Activated CD4-positive, alpha-beta memory T cell treated with anti-CD3 and anti-CD28 coated beads for 36 hours (primary cell): ENCODE measurements at regions of chr1 and their contacts with region 1.

Region 1: DNA sequence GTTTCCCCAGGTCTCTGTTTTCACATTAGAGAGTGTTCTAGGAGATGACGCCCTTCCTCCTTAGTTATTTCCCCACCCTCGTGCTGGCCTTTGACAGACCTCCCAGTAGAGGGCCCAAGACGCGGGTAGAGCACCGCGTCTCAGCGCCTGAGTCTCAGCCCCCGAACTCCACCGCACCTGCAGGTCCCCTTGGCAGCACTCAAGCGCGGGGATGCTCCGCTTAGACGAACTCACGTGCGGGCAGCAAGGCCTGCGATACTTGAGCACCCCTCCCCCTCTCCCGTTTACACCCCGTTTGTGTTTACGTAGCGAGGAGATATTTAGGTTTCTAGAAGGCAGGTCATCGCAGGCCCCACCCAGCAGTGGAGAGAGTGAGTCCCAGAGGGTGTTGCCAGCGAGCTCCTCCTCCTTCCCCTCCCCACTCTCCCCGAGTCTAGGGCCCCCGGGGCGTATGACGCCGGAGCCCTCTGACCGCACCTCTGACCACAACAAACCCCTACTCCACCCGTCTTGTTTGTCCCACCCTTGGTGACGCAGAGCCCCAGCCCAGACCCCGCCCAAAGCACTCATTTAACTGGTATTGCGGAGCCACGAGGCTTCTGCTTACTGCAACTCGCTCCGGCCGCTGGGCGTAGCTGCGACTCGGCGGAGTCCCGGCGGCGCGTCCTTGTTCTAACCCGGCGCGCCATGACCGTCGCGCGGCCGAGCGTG is at the start of gene CD55:
- DNase-seq: peak; percentile 99
- H3K4me3 Mint-ChIP-seq: peak within 1 kb of the TSS; percentile 92
- H3K27ac Mint-ChIP-seq: peak within 1 kb of the TSS; percentile 96
- H3K4me1 Mint-ChIP-seq: peaks cover 33% of the 10 kb centered on the region
- H3K27me3 Mint-ChIP-seq: no peaks in the 10 kb centered on the region
- total RNA-seq, gene CD55: 40.4 to 42.3 TPM

Region 2: DNA sequence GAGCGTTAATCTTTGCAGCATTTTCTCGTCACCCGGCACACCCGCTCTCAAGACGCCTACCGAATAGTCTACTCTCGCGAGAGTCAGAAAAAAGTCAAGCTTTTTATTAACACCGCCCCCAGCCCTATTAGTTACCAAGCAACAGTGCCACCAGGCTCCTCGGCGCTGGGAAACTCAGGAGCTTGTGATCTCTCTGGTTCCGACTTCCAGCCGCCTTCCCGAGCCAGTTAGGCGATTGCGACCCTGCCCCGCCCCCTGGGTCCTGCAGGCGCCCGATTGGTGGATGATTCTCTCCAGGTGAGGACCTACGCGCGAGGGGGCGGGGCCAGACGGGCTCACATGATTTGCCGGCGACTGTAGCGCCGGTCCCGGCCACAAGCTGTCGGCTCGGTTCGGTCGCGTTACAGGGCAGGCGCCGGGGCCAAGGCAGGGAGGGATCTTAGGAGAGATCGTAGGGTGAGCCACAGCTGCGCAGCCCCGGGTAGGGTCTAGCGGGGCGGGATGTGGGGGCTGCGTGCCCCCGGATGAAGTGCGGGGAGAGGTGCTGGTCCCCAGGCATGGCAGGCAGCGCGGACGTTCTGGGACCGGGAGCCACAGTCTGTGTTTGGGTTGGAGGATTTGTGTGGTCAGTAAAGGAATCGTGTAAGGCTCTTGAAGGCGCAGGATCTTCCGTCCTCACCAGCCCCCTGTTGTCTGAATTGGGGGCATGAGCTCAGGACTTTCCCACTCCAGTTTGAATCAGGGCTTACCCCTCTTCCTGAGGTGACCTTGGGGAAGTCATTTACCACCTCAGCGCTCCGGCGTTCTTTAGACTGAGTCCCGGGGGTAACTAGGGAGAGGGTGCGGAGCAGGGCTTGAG is 268.1 kb before region 1 on chr1 and contains the start of gene PFKFB2:
- CTCF ChIA-PET with region 1: no interaction called
- POLR2A ChIA-PET with region 1: interaction called, 3 read pairs
- intact Hi-C with region 1: loop called (anchors 1 kb)
- DNase-seq: peak; percentile 95
- H3K4me3 Mint-ChIP-seq: peak within 1 kb of the TSS; percentile 93
- H3K27ac Mint-ChIP-seq: peak within 1 kb of the TSS; percentile 67
- H3K4me1 Mint-ChIP-seq: peaks cover 33% of the 10 kb centered on the region
- H3K27me3 Mint-ChIP-seq: no peaks in the 10 kb centered on the region
- total RNA-seq, gene PFKFB2: 2.1 to 2.5 TPM

Region 3: GRCh38 chr1:207336559-207337467 is 15.6 kb after region 1 on chr1:
- CTCF ChIA-PET with region 1: interaction called, 21 read pairs
- POLR2A ChIA-PET with region 1: interaction called, 56 read pairs
- intact Hi-C with region 1: loop called (anchors 1 kb)
- DNase-seq: peak; percentile 39
- H3K4me3 Mint-ChIP-seq: no peak overlapping the region
- H3K27ac Mint-ChIP-seq: peak overlapping the region; percentile 86
- H3K4me1 Mint-ChIP-seq: peaks cover 58% of the 10 kb centered on the region
- H3K27me3 Mint-ChIP-seq: no peaks in the 10 kb centered on the region

Region 4: GRCh38 chr1:207362962-207363858 is 42.0 kb after region 1 on chr1:
- CTCF ChIA-PET with region 1: interaction called, 4 read pairs
- POLR2A ChIA-PET with region 1: interaction called, 9 read pairs
- intact Hi-C with region 1: loop called (anchors 1 kb)
- DNase-seq: peak; percentile 18
- H3K4me3 Mint-ChIP-seq: no peak overlapping the region
- H3K27ac Mint-ChIP-seq: no peak overlapping the region
- H3K4me1 Mint-ChIP-seq: no peaks in the 10 kb centered on the region
- H3K27me3 Mint-ChIP-seq: no peaks in the 10 kb centered on the region

Region 5: GRCh38 chr1:207389740-207390464 is 68.7 kb after region 1 on chr1:
- CTCF ChIA-PET with region 1: interaction called, 3 read pairs
- POLR2A ChIA-PET with region 1: interaction called, 6 read pairs
- intact Hi-C with region 1: loop called (anchors 1 kb)
- DNase-seq: no peak
- H3K4me3 Mint-ChIP-seq: no peak overlapping the region
- H3K27ac Mint-ChIP-seq: peak overlapping the region; percentile 30
- H3K4me1 Mint-ChIP-seq: peaks cover 7% of the 10 kb centered on the region
- H3K27me3 Mint-ChIP-seq: peaks cover 12% of the 10 kb centered on the region

Region 6: GRCh38 chr1:207654320-207654719 is 333.1 kb after region 1 on chr1:
- CTCF ChIA-PET with region 1: no interaction called
- POLR2A ChIA-PET with region 1: no interaction called
- intact Hi-C with region 1: no loop called
- DNase-seq: no peak
- H3K4me3 Mint-ChIP-seq: no peak overlapping the region
- H3K27ac Mint-ChIP-seq: no peak overlapping the region
- H3K4me1 Mint-ChIP-seq: peaks cover 7% of the 10 kb centered on the region
- H3K27me3 Mint-ChIP-seq: peaks cover 4% of the 10 kb centered on the region

Region 7: DNA sequence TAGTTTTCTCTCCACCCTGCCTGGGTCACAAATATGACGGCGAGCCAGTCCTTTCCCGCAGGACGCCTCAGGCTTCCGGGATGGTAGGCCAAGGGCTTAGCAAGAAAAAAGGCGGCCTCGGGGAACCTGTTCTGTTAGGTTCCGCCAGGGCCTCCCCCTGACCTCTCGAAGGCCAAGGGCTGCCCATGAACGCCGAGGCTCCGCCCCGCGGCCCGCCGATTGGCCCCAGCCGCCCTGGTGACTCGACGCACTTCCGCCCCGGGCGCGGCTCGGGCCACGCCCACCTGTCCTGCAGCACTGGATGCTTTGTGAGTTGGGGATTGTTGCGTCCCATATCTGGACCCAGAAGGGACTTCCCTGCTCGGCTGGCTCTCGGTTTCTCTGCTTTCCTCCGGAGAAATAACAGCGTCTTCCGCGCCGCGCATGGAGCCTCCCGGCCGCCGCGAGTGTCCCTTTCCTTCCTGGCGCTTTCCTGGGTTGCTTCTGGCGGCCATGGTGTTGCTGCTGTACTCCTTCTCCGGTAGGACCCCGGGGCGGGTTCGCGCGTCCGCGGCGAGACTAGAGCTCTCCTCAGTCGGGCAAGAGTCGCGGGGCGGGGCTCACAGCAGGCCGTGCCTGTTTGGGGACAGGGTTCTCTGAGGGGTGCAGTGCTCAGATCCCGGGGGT is 430.7 kb after region 1 on chr1 and contains the start of gene CD46:
- CTCF ChIA-PET with region 1: no interaction called
- POLR2A ChIA-PET with region 1: no interaction called
- intact Hi-C with region 1: loop called (anchors 5 kb)
- DNase-seq: peak; percentile 97
- H3K4me3 Mint-ChIP-seq: peak within 1 kb of the TSS; percentile 94
- H3K27ac Mint-ChIP-seq: peak within 1 kb of the TSS; percentile 96
- H3K4me1 Mint-ChIP-seq: peaks cover 60% of the 10 kb centered on the region
- H3K27me3 Mint-ChIP-seq: no peaks in the 10 kb centered on the region
- total RNA-seq, gene CD46: 94.6 to 96.9 TPM